Natural killer cell (primary cell): ENCODE measurements at regions of chr6 and their contacts with region 1.

Region 1: DNA sequence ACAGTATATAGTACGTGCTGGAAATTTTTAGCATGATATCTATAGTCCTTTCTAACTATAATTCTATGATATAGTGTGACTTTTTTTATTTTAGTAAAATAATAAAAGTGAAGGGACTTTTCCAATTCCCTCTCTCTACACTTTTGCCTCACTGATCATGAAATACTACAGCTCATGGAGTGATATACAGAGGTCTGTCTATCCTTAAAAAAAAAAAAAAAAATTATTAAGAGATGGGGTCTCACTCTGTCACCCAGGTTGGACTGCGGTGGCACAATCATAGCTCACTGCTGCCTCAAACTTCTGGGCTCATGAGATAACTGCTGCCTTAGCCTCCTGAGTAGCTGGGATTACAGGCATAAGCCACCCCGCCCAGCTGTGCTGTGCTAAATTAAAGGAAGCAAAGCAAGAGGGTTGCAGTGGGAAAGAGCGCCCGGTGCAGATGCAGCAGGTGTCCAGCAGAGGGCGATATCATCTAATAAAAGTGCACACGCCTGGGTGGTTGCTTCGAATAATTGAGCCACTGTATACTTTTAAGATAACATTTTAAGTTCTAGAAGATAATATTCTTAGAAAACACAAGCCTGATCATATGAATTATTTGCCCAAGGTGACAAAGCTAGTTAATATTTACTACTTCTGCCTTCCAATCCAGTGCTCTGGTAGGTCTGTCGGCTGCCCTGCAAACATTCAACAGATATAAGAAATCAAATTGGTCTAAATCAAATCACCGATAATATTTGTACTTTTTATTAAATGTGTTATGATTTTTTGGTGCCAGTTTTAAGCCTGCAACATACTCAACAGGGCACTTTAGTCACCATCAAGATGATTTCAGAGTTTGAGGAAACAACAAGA is 94.9 kb upstream of the NT5E start:
- DNase-seq: peak; percentile 40 to 70
- ATAC-seq: peak; percentile 81 to 87 (median 82)
- H3K4me3 ChIP-seq: no peak overlapping the region
- H3K4me3 Mint-ChIP-seq: no peak overlapping the region
- H3K27ac ChIP-seq: no peak overlapping the region
- H3K27ac Mint-ChIP-seq: no peak overlapping the region
- H3K4me1 ChIP-seq: no peaks in the 10 kb centered on the region
- H3K4me1 Mint-ChIP-seq: no peaks in the 10 kb centered on the region
- H3K27me3 ChIP-seq: peaks cover 2% of the 10 kb centered on the region
- H3K27me3 Mint-ChIP-seq: peaks cover 10 to 11% of the 10 kb centered on the region in 2 donors
- CTCF ChIP-seq: peak; percentile 97

Region 2: DNA sequence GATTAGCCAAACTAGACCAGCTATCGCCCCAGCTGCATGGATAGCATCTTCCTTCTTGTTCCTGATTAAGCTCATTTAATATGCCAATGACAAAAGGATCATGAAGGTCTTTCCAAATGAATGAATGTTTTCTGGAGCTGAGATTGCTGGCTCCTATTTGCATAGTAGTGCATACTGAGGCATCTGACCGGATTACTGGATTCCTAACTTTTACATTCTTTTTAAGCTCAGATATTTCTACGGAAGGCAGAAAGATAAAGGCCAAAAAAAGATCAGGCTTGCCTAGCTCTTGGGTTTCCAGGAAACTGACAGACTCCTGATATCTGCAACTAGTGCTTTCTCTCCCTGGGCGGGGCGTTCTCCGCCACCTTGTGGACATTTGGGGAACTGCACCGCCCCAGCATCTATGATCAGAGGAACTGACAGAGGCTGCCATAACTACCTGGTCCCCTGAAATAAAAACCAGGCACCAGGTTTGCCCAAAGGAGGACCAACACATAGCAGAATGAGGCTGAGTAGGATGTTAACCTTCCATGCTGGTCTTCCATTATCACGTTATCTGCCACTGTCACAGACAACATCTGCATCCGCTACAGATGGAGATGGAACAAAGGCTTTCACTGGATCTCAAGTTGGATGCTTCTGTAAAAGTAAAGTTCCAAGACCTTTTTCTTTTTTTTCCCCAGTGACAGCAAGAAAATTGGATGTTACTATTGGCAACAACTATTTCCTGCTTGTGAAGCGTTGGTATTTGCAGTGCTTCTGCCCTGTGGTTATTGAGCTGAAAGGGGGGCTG is 128.1 kb after region 1 on chr6:
- intact Hi-C with region 1: loop called (anchors 1 kb)
- DNase-seq: peak; percentile 78 to 81
- ATAC-seq: peak; percentile 82 to 96 (median 94)
- H3K4me3 ChIP-seq: no peak overlapping the region
- H3K4me3 Mint-ChIP-seq: no peak overlapping the region
- H3K27ac ChIP-seq: no peak overlapping the region
- H3K27ac Mint-ChIP-seq: no peak overlapping the region
- H3K4me1 ChIP-seq: no peaks in the 10 kb centered on the region
- H3K4me1 Mint-ChIP-seq: peaks cover 6% of the 10 kb centered on the region in 2 donors
- H3K27me3 ChIP-seq: peaks cover 4% of the 10 kb centered on the region
- H3K27me3 Mint-ChIP-seq: peaks cover 11 to 22% of the 10 kb centered on the region in 2 donors
- CTCF ChIP-seq: peak; percentile 99

Region 3: DNA sequence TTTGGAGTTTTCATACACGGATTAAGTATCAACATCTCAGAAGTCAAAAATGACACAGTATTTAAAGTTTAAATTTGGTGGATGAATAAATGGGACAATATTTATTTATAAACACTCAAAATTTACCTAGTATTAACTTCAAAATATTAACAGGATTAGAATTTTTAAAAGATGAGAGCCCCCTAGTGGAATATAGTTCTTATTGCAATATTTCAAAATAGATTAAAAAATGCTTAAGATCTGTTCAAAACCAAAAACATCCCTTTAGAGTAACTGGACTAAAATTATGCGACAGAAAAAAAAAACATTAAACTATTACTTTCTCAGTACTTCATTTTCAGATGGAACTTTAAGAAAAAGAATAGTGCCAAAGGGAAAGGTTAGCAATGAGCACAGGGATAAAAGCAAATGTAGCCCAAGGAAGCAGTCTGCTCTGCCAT is 182.1 kb after region 1 on chr6:
- intact Hi-C with region 1: loop called (anchors 2 kb)
- DNase-seq: peak in 1 of 2 donors; percentile 11
- ATAC-seq: no peak
- H3K4me3 ChIP-seq: no peak overlapping the region
- H3K4me3 Mint-ChIP-seq: no peak overlapping the region
- H3K27ac ChIP-seq: no peak overlapping the region
- H3K27ac Mint-ChIP-seq: peak overlapping the region in 1 of 2 donors; percentile 43
- H3K4me1 ChIP-seq: no peaks in the 10 kb centered on the region
- H3K4me1 Mint-ChIP-seq: no peaks in the 10 kb centered on the region
- H3K27me3 ChIP-seq: no peaks in the 10 kb centered on the region
- H3K27me3 Mint-ChIP-seq: no peaks in the 10 kb centered on the region
- CTCF ChIP-seq: peak; percentile 85